Astrocyte of the cerebellum (primary cell): ENCODE measurements at regions of chr4 and their contacts with region 1.

Region 1: GRCh38 chr4:119623025-119623424 is 5.6 kb downstream of the PDE5A start:
- DNase-seq: peak; percentile 42
- H3K4me3 ChIP-seq: no peak overlapping the region
- CTCF ChIP-seq: no peak

Region 2: GRCh38 chr4:119540249-119540648 is 82.8 kb before region 1 on chr4:
- in situ Hi-C with region 1: loop called (anchors 5 kb)
- DNase-seq: no peak
- H3K4me3 ChIP-seq: no peak overlapping the region
- CTCF ChIP-seq: no peak

Region 3: GRCh38 chr4:119678761-119679160 is 55.7 kb after region 1 on chr4:
- in situ Hi-C with region 1: no loop called
- DNase-seq: no peak
- H3K4me3 ChIP-seq: no peak overlapping the region
- CTCF ChIP-seq: no peak